Activated T-helper 2 cell treated with anti-CD3 and anti-CD28 coated beads, Interferon-gamma antibody, Interleukin-2, Interleukin-4, amounts not matched to agents 10 μg/mL and 5 μg/mL and 100 μg/mL, durations not matched to agents 14 hours and 24 hours and 36 hours (primary cell): ENCODE measurements at regions of chr2 and their contacts with region 1.

Region 1: GRCh38 chr2:173101687-173102086 is 26.0 kb downstream of the MAP3K20 start:
- DNase-seq: no peak
- H3K4me3 Mint-ChIP-seq: no peak overlapping the region
- H3K27ac Mint-ChIP-seq: peak overlapping the region; percentile 38
- H3K4me1 Mint-ChIP-seq: peaks cover 51% of the 10 kb centered on the region
- H3K27me3 Mint-ChIP-seq: no peaks in the 10 kb centered on the region

Region 2: DNA sequence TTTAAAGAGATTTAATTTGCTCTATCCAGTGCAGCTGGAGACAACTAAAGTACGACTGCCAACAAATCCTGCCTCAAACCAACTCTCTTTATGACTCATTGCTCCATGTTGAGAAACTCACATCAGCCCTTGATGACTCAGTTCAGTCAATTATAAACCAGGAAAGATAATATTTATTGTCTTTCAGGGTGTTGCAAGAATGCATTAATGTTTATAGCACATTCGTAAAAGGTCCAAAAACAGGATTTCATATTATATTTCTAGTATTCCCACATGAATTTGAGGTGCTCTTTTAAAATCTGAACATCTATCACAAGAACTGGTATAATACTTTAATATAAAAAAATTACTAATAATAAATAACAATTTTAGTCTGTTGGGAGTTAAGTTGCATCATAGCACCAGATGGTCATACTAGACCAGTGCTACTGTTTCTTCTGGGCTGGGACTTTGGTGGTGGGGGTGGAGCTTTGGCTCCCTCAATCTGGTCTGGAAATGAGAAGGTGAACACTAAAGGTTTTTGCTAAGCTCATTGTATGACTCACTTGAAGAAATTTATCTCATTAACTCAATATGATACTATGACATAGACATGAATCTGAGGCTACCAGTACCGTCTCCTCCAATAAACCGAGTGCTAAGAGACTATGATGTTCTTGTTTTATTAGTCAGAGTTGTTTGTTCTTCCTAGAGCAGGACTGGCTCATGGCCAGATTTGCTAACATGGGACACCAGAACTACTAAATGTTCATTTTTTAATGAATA is 52.6 kb before region 1 on chr2:
- intact Hi-C with region 1: loop called (anchors 1 kb)
- DNase-seq: no peak
- H3K4me3 Mint-ChIP-seq: no peak overlapping the region
- H3K27ac Mint-ChIP-seq: no peak overlapping the region
- H3K4me1 Mint-ChIP-seq: peaks cover 14% of the 10 kb centered on the region
- H3K27me3 Mint-ChIP-seq: peaks cover 31% of the 10 kb centered on the region